Heart left ventricle (tissue), 16 donors: ENCODE measurements at regions of chr6 and their contacts with region 1.

Region 1: GRCh38 chr6:145633981-145634627 is 101.2 kb downstream of the EPM2A start:
- DNase-seq: peak; percentile 77 to 87 (median 84)
- ATAC-seq: peak; percentile 86 to 93 (median 90)
- H3K4me3 ChIP-seq: no peak overlapping the region
- H3K27ac ChIP-seq: no peak overlapping the region
- H3K4me1 ChIP-seq: peaks cover 0 to 23% (median 4%) of the 10 kb centered on the region in 12 donors
- H3K27me3 ChIP-seq: no peaks in the 10 kb centered on the region
- CTCF ChIP-seq: peak; percentile 78 to 93 (median 84)
- POLR2A ChIP-seq: no peak

Region 2: DNA sequence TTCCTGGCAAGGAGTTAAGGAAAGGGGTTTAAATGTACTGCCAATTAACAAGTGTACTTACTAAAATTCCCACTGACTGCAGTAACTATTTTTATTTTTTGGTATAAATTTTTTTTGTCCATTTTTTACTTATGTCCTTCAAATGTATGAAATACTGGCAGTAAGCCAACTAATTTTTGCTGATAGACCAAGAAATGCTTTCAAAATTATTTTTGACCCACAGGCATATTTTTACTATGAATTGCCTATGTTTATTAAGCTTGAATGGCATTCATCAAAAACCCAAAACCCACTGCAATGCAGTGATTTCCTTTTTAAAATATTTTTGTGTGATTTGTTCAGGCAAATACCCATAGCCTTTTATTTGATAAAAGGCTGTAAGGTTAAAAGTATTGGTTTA is 788.9 kb before region 1 on chr6:
- intact Hi-C with region 1: loop called in 1 of 10 experiments (anchors 5 kb)
- DNase-seq: no peak
- ATAC-seq: no peak
- H3K4me3 ChIP-seq: no peak overlapping the region
- H3K27ac ChIP-seq: no peak overlapping the region
- H3K4me1 ChIP-seq: no peaks in the 10 kb centered on the region
- H3K27me3 ChIP-seq: no peaks in the 10 kb centered on the region
- CTCF ChIP-seq: no peak
- POLR2A ChIP-seq: no peak

Region 3: GRCh38 chr6:145147981-145148783 is 485.9 kb before region 1 on chr6:
- intact Hi-C with region 1: loop called in 1 of 10 experiments (anchors 10 kb)
- DNase-seq: peak in 4 of 5 donors; percentile 13 to 54 (median 26)
- ATAC-seq: peak; percentile 77 to 97 (median 90)
- H3K4me3 ChIP-seq: no peak overlapping the region
- H3K27ac ChIP-seq: peak overlapping the region in 5 of 12 donors; percentile 14 to 47 (median 35)
- H3K4me1 ChIP-seq: peaks cover 0 to 19% (median 0%) of the 10 kb centered on the region in 12 donors
- H3K27me3 ChIP-seq: no peaks in the 10 kb centered on the region
- CTCF ChIP-seq: no peak
- POLR2A ChIP-seq: no peak

Region 4: GRCh38 chr6:145214570-145214969 is 419.5 kb before region 1 on chr6:
- intact Hi-C with region 1: loop called in 3 of 10 experiments (anchors 2 to 10 kb)
- DNase-seq: no peak
- ATAC-seq: no peak
- H3K4me3 ChIP-seq: peak overlapping the region in 1 of 12 donors; percentile 17
- H3K27ac ChIP-seq: no peak overlapping the region
- H3K4me1 ChIP-seq: no peaks in the 10 kb centered on the region
- H3K27me3 ChIP-seq: no peaks in the 10 kb centered on the region
- CTCF ChIP-seq: peak; percentile 40 to 72 (median 59)
- POLR2A ChIP-seq: no peak

Region 5: GRCh38 chr6:145309842-145310535 is 324.1 kb before region 1 on chr6:
- intact Hi-C with region 1: no loop called
- DNase-seq: no peak
- ATAC-seq: no peak
- H3K4me3 ChIP-seq: no peak overlapping the region
- H3K27ac ChIP-seq: no peak overlapping the region
- H3K4me1 ChIP-seq: no peaks in the 10 kb centered on the region
- H3K27me3 ChIP-seq: no peaks in the 10 kb centered on the region
- CTCF ChIP-seq: no peak
- POLR2A ChIP-seq: no peak

Region 6: DNA sequence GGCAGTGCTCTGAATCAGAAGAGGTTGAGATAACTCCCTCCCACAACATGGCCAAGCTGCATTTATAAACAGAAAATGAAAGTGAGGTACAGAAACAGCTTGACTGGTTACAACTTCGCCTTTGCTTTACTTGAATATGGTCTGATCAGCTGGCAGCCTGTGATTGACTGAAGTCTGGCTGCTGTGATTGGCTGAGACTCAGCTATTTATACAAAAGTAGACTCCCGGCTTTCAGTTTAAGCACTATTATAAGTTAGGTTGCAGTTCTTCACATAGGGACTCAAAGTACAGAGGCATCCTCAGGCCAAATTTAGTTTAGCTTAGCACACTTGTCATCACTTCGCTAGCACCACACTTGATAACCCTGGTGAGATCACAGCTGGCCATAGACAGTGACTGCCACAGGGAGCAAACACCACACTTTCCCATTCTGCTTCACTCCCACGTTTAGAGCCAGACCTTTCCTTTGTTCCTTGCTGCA is 261.4 kb before region 1 on chr6:
- intact Hi-C with region 1: loop called in 1 of 10 experiments (anchors 5 kb)
- DNase-seq: peak in 4 of 5 donors; percentile 62 to 74 (median 72)
- ATAC-seq: peak; percentile 98 to 99 (median 98)
- H3K4me3 ChIP-seq: peak overlapping the region in 9 of 12 donors; percentile 10 to 38 (median 30)
- H3K27ac ChIP-seq: peak overlapping the region; percentile 49 to 77 (median 68)
- H3K4me1 ChIP-seq: peaks cover 0 to 21% (median 6%) of the 10 kb centered on the region in 12 donors
- H3K27me3 ChIP-seq: no peaks in the 10 kb centered on the region
- CTCF ChIP-seq: no peak
- POLR2A ChIP-seq: no peak

Region 7: DNA sequence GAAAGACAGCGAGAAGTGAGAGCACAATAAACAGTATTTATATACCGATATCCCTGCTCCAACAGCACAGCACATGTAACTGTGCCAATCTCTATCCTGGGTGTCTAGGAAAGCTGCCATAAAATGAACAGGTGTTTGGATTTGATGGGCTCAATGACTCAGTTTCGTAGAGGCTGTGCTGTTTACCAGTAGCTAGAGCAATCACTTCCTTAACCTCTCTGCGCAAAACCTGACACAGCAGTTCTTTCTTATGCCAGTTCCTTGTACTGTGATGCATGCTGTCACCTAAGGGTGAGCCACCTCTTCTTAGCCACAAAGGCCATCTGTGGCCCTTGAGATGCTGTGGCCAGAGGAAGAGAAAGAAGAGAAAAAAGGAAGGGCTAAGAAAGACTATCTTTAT is 270.8 kb after region 1 on chr6:
- intact Hi-C with region 1: no loop called
- DNase-seq: no peak
- ATAC-seq: peak in 3 of 4 donors; percentile 26 to 60 (median 37)
- H3K4me3 ChIP-seq: no peak overlapping the region
- H3K27ac ChIP-seq: no peak overlapping the region
- H3K4me1 ChIP-seq: peaks cover 0 to 12% (median 4%) of the 10 kb centered on the region in 12 donors
- H3K27me3 ChIP-seq: no peaks in the 10 kb centered on the region
- CTCF ChIP-seq: no peak
- POLR2A ChIP-seq: no peak